Heart left ventricle (tissue), 16 donors: ENCODE measurements at regions of chr3 and their contacts with region 1.

Region 1: GRCh38 chr3:35071772-35072171 is 567.6 kb upstream of the ARPP21 start:
- DNase-seq: no peak
- ATAC-seq: no peak
- H3K4me3 ChIP-seq: no peak overlapping the region
- H3K27ac ChIP-seq: no peak overlapping the region
- H3K4me1 ChIP-seq: no peaks in the 10 kb centered on the region
- H3K27me3 ChIP-seq: no peaks in the 10 kb centered on the region
- CTCF ChIP-seq: no peak
- POLR2A ChIP-seq: no peak

Region 2: GRCh38 chr3:34323517-34323916 is 748.3 kb before region 1 on chr3:
- intact Hi-C with region 1: loop called in 1 of 10 experiments (anchors 10 kb)
- DNase-seq: no peak
- ATAC-seq: no peak
- H3K4me3 ChIP-seq: no peak overlapping the region
- H3K27ac ChIP-seq: no peak overlapping the region
- H3K4me1 ChIP-seq: no peaks in the 10 kb centered on the region
- H3K27me3 ChIP-seq: no peaks in the 10 kb centered on the region
- CTCF ChIP-seq: no peak
- POLR2A ChIP-seq: no peak